ENCODE measurements at regions of chr4 and their contacts with region 1.

Region 1: GRCh38 chr4:56641494-56642051 is 39.5 kb downstream of the HOPX start:
- DNase-seq: no peak
- ATAC-seq: peak; percentile 80
- H3K4me3 Mint-ChIP-seq: no peak overlapping the region
- H3K27ac Mint-ChIP-seq: peak overlapping the region; percentile 82
- H3K4me1 Mint-ChIP-seq: peaks cover 36% of the 10 kb centered on the region
- H3K27me3 Mint-ChIP-seq: no peaks in the 10 kb centered on the region

Region 2: DNA sequence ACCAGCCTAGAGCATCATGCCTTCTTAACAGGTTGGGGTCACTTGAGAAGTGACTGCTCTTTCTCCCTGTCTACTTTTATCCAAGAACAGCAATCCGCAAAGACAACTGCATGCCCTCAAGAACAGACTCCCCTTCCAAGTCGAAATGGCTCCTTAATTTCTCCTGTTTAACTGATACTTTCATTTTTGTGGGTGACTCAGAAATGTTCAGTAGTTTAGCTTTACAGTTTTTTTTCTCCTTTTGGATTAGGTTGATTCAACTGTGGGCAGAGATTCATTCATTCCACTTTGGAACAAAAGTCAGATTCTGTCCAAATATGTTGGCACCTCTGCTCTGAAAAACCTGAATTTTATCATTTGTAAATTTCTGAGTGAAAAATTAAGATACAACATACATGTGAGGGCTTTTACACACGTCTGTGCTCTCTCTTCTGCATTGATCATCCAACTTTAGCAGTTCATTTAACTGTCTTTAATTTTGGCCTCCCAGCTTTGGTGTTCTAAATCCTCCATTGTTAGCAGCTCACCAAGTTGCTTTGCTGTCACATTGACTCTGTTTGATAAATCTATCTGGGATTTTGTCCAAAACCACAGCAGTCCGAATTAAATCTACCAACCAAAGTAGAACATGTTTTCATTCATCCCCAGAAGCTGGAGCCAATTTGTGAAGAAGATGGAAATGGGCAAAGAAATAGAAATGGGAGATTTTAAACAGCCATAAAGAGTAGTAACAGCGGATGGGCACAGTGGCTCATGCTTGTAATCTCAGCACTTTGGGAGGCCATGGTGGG is 10.5 kb before region 1 on chr4:
- CTCF ChIA-PET with region 1: interaction called, 13 read pairs
- POLR2A ChIA-PET with region 1: no interaction called
- intact Hi-C with region 1: no loop called
- DNase-seq: no peak
- ATAC-seq: no peak
- H3K4me3 Mint-ChIP-seq: no peak overlapping the region
- H3K27ac Mint-ChIP-seq: no peak overlapping the region
- H3K4me1 Mint-ChIP-seq: peaks cover 5% of the 10 kb centered on the region
- H3K27me3 Mint-ChIP-seq: no peaks in the 10 kb centered on the region